ENCODE measurements at regions of chr5 and their contacts with region 1.

Region 1: DNA sequence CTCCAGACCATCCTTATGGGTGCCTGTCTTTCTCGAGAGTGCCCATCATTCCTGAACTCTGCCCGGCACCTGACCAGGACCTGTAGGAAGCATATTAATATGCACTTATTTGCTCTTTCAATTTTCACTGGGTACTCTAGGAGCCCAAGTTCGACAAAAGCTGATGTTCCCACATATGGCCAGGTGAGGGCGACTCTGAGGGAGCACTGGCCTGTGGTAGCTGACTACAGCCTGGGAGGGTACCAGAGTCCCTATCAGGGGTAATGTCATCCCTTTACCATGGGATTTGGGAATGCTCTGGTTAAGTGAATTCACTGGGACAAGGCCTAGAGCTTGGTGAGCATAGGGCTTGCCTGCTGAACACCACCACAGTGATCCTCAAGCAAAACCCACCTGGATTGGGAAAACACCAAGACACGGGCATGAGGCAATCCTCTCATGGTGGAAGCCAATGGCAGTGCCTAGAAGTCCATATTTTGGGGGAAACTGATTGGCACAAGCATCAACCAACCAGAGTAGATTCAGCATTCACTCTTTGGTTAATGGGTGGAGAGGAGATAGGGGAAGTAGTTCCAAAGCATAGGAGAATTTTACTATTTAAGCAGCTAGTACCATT is 112.2 kb downstream of the MTX3 start:
- DNase-seq: peak; percentile 31
- CTCF ChIP-seq: peak; percentile 56

Region 2: DNA sequence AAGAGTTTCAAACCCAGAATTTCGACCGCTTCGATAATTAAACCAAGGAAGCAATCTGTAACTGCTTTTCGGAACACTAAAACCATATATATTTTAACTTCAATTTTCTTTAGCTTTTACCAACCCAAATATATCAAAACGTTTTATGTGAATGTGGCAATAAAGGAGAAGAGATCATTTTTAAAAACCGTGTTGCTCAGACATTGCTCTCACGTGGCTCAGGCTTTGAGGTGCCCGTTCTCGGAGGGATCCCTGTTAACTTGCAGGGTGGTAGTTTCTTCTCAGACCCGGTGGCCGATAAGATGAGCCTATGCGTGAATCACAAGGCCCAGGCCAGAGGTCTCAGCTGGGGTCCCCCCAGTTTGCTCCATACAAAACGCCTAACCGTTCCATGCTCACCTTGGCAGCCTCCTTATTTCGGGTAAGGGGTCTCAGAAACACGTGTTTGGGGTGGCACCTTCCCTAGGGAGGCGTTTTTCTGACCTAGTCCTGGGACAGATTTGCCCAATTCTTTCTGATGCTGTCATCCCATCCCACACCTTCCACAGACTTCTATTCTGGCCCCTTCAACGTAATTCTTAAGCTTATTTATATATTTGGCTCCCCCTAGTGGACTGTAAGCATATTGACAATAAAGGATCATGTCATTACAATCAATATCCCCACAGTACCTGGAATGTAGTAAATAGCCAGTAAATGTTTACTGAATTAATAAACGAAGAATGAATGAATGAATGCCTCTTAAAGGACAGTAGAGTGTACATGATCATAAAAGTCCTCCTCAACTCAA is 204.5 kb after region 1 on chr5:
- in situ Hi-C with region 1: loop called (anchors 10 kb)
- DNase-seq: peak; percentile 80
- CTCF ChIP-seq: peak; percentile 72

Region 3: GRCh38 chr5:80318212-80318611 is 439.4 kb after region 1 on chr5:
- in situ Hi-C with region 1: loop called (anchors 25 kb)
- DNase-seq: no peak
- CTCF ChIP-seq: no peak

Measured in GM13977 (cell line).